Esophagus muscularis mucosa (tissue), 4 donors: ENCODE measurements at regions of chr7 and their contacts with region 1.

Region 1: GRCh38 chr7:24979863-24980533 is at the start of gene OSBPL3:
- DNase-seq: peak; percentile 98
- H3K4me3 ChIP-seq: peak within 1 kb of the TSS; percentile 75 to 85 (median 78)
- H3K27ac ChIP-seq: peak within 1 kb of the TSS; percentile 89 to 93 (median 92)
- H3K4me1 ChIP-seq: peaks cover 13 to 29% (median 20%) of the 10 kb centered on the region in 4 donors
- H3K27me3 ChIP-seq: no peaks in the 10 kb centered on the region
- CTCF ChIP-seq: peak in 1 of 3 experiments; percentile 13
- EP300 ChIP-seq: no peak
- POLR2A ChIP-seq: peak; percentile 26
- total RNA-seq, gene OSBPL3: 2.6 to 4.6 (median 3.3) TPM

Region 2: DNA sequence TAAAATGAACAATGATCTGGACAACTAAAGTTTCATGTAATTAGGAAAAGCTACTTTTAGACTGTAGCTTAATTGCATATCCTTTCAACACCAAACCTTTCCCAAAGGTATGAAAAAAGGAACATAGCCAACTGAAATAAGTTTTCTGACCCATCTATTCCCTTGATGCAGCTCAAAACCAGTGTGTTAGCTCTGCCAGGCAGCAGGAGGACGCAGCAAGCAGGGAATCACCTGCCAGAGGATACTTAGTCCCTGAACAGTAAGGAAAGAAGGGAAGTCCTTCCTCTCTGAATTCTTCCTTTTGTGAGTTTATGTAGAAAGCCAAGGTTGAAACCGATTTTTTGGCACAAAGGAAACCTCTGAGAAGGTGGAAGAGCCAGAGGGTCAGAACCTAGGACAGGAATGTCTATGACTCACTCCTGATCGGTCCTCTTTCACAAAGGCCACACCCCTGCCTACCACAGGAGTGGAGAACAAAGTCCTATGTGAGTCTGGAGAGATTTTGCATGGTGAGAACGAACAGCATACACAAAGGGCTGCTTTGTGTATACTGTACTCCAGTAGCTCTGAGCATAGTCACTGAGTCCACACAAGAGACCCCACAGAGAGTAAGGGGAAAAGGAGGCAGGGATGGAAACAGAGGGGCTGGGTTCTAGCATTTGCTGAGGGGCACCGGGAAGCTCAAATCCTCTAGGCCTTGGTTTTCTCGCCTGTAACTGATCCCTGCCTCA is 153.9 kb before region 1 on chr7:
- intact Hi-C with region 1: loop called (anchors 5 kb)
- DNase-seq: no peak
- H3K4me3 ChIP-seq: no peak overlapping the region
- H3K27ac ChIP-seq: peak overlapping the region in 3 of 4 donors; percentile 16 to 24 (median 22)
- H3K4me1 ChIP-seq: peaks cover 23 to 69% (median 51%) of the 10 kb centered on the region in 4 donors
- H3K27me3 ChIP-seq: no peaks in the 10 kb centered on the region
- CTCF ChIP-seq: no peak
- EP300 ChIP-seq: no peak
- POLR2A ChIP-seq: no peak

Region 3: DNA sequence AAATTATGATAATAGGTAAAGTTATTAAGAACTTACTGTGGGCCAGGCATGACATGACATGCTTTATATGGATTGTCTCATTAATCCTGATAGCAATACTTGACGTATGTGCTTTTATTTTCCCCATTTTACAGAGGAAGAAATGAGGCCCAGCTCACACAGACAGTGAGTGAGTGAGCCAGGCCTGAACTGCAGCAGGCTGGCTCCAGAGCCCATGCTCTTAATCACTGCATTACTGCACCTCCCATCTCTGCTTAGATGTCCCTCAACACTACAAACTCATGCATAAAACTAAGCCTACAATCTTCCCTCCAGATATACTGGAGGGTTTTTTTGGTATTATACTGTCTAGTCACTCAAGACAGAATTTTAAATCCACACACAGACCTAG is 68.4 kb after region 1 on chr7:
- intact Hi-C with region 1: no loop called
- DNase-seq: no peak
- H3K4me3 ChIP-seq: no peak overlapping the region
- H3K27ac ChIP-seq: no peak overlapping the region
- H3K4me1 ChIP-seq: no peaks in the 10 kb centered on the region
- H3K27me3 ChIP-seq: no peaks in the 10 kb centered on the region
- CTCF ChIP-seq: no peak
- EP300 ChIP-seq: no peak
- POLR2A ChIP-seq: no peak